ENCODE measurements at regions of chr12 and their contacts with region 1.

Region 1: DNA sequence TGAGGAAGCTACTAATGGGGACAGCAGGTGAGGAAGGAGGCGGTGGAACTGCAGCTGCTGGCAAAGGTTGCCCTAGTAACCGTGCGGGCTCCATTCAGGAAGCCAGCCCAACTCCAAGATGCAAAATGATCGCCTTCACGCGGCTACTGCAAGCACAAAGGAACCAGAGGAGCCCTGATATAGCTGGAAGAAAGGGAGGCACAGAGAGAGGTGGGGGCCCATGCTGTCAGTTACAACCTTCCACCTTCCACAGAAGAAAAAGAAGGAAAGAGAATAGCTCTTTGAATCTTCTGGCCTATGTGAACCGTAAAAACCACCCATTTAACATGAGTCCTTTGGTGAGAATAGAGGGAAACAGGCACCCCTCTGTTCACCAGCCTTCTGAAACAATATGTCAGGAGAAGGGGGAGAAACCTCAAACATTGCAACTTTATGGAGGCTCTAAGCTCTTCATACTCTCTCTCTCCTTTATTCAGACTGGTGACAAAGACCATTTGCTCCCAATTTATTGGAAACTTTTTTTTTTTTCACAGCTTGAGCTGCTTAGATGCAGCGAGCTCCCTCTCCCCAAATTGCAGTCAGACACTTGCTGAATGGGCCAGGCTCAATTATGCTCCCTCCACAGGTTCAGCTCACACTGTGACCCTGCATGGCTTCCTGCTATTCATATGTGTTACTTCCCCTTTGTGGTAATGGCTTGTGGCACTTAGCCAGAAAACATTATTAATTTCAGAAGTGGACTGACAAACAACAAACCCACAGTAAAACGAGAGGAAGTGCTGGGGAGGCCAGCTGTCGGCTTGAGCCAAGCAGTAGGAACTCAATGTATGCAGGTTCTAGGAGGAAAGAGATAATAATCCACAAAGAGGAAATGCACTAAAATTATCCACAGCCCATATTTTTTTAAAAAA is 6.2 kb downstream of the DUSP6 start:
- DNase-seq: peak; percentile 62
- H3K4me3 ChIP-seq: no peak overlapping the region
- H3K27ac ChIP-seq: peak overlapping the region; percentile 68
- H3K4me1 ChIP-seq: peaks cover 7% of the 10 kb centered on the region
- H3K27me3 ChIP-seq: no peaks in the 10 kb centered on the region
- CTCF ChIP-seq: no peak

Region 2: DNA sequence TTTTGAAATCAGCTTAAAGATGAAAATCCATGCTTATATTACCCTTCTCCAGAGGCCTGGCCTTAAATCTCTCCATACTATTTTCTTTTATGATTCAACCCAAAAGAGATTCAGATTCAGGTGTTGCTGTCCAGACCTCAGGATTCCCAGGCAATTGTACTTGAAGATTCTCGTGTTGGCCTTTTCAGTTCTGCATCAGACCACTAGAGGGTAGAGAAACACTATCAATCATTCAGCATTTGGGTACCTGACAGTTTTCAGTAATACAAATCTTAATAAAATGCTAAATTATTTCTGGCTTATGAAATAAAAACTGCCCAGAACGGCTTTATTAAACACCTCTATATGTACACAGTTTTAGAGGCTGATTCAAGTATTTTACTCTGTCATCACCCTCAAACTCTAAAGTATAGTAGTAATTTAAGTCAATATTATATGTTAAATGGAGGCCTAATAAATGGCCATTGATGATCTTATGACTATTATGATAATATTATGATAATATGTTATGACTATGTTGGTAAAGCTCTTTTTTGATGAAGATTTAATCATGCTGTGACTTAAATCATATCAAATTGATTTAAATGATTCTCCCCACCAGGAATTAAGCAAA is 294.9 kb before region 1 on chr12:
- intact Hi-C with region 1: loop called (anchors 5 kb)
- DNase-seq: peak; percentile 44
- H3K4me3 ChIP-seq: no peak overlapping the region
- H3K27ac ChIP-seq: no peak overlapping the region
- H3K4me1 ChIP-seq: no peaks in the 10 kb centered on the region
- H3K27me3 ChIP-seq: no peaks in the 10 kb centered on the region
- CTCF ChIP-seq: peak; percentile 95

Region 3: GRCh38 chr12:89451841-89452251 is 105.8 kb after region 1 on chr12:
- intact Hi-C with region 1: loop called (anchors 10 kb)
- DNase-seq: no peak
- H3K4me3 ChIP-seq: no peak overlapping the region
- H3K27ac ChIP-seq: peak overlapping the region; percentile 30
- H3K4me1 ChIP-seq: no peaks in the 10 kb centered on the region
- H3K27me3 ChIP-seq: no peaks in the 10 kb centered on the region
- CTCF ChIP-seq: no peak